Left lung (tissue), 14 donors: ENCODE measurements at regions of chr1 and their contacts with region 1.

Region 1: DNA sequence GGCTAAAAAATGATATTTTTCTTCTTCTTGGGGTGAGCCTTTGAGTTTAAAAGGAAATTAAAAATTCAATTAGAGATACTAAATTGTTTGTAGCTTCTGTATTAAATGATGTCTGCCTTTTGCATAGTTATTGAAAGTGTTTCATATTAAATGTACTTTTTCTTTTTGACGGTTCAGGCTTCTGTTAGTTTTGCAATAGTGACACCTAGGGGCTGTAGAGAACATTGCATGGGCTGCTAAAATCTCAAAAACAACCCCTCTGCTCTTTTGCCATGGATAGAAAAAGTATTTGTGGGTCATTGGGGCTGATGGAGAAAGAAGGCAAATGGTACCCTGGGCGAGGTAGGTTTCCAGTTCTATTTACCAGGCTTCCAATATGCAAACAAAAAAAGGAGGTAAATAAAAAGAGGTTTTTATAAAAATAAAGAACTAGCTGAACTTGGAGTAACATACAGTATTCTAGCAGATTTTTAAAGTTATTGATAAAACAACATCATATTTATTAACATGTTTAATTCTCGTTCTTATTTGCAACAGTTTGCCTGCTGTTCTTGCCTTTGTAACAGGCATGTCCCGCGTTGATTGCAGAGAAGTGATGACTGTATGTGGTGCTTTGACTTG is 115.4 kb upstream of the HOOK1 start:
- DNase-seq: peak in 2 of 4 donors; percentile 38 to 58
- ATAC-seq: peak; percentile 79
- H3K4me3 ChIP-seq: no peak overlapping the region
- H3K27ac ChIP-seq: no peak overlapping the region
- H3K4me1 ChIP-seq: peaks cover 13 to 43% of the 10 kb centered on the region in 2 donors
- H3K27me3 ChIP-seq: no peaks in the 10 kb centered on the region
- CTCF ChIP-seq: peak; percentile 88 to 90

Region 2: DNA sequence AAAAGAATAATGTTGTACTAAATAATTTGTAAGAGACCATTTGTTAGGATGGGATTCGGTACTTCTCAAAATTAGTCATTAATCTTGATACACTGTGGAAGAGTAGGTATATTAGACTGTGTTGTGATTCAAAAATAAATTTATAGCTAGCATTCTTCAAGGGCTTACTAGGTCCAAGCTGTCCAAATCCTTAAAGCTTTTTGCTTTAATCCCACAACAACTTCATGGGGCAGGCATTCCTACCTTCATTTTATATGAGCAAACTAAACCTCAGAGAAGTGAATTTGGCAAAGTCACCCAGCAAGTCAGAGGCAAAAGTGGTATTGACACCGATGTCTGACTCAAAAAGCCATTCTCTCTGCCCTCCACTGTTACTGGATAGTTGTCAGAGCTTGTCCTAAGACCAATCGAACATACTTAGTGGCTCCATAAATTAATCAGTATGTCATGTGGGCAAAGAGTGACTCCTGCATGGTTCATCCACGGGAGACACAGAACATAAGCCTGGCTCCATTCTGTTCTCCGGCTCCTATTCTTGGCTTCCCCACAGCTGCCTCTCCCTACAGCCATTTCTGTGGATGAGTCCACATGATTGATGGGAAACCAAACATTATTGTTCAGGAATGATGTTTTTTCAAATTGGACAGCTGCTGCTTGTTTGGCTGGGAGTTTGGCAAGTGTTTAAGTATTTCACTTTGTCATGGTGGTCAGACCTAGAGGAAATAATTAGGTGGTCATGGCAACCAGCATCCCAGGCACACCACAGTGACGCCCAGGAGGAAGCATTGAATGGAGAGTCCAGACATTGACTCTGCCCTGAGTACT is 535.9 kb before region 1 on chr1:
- intact Hi-C with region 1: loop called in 1 of 2 experiments (anchors 10 kb)
- DNase-seq: no peak
- ATAC-seq: no peak
- H3K4me3 ChIP-seq: no peak overlapping the region
- H3K27ac ChIP-seq: no peak overlapping the region
- H3K4me1 ChIP-seq: no peaks in the 10 kb centered on the region
- H3K27me3 ChIP-seq: no peaks in the 10 kb centered on the region
- CTCF ChIP-seq: no peak

Region 3: DNA sequence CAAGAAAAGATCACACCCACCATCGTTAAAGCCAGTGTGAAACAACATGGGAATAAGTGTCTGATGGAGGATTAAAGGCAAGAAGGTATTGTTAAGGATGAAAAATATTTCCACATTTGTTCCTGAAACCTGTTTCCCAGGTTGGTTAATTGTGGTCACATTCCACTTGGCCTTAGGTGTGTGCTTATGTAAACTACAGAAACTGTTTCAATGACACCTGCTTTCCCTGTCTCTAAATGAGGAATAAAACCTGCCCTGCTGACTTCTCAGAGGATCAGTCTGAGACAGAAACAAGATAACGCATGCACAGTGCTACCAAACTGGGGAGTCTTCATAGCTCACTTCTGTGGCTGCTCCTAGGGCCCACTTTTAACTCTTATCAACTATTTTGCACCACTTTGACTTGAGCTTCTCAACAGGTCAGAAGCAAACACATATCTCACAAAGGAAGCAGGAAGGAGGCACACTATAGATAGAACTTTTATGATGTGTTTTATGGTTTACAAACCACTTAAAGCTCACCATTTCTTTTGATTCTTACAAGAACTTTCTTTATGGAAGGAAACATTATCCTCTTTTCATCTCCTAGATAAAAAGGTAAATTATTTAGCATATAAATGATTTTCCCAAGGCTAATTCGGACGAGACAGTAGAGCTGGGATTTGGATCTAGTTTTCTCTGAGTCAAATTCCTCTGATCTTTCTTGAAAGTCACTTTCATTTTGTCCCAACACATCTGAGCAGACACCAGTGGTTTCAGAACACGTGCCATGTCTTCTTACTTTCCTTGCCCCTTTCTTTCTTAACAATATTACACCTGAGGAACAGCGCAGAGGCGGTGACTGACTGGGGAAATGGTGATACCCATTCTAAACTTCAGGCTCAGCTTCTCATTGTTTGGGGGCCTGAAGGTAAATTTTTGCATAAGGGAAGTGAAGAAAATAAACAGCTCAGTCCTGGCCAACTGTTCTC is 193.8 kb after region 1 on chr1:
- intact Hi-C with region 1: no loop called
- DNase-seq: peak in 1 of 4 donors; percentile 68
- ATAC-seq: peak; percentile 96
- H3K4me3 ChIP-seq: no peak overlapping the region
- H3K27ac ChIP-seq: peak overlapping the region; percentile 43 to 79
- H3K4me1 ChIP-seq: no peaks in the 10 kb centered on the region
- H3K27me3 ChIP-seq: no peaks in the 10 kb centered on the region
- CTCF ChIP-seq: no peak